ENCODE measurements at regions of chr2 and their contacts with region 1.

Region 1: GRCh38 chr2:181891966-181892798 is 652 bp downstream of the ITPRID2 start:
- DNase-seq: peak; percentile 61
- H3K4me3 Mint-ChIP-seq: peak overlapping the region; percentile 94
- H3K27ac Mint-ChIP-seq: peak overlapping the region; percentile 81
- H3K4me1 Mint-ChIP-seq: peaks cover 28% of the 10 kb centered on the region
- H3K27me3 Mint-ChIP-seq: peaks cover 12% of the 10 kb centered on the region

Region 2: GRCh38 chr2:180006781-180007579 is 1885.2 kb before region 1 on chr2 and contains the start of gene CWC22:
- CTCF ChIA-PET with region 1: no interaction called
- intact Hi-C with region 1: loop called (anchors 10 kb)
- DNase-seq: peak; percentile 93
- H3K4me3 Mint-ChIP-seq: peak within 1 kb of the TSS; percentile 92
- H3K27ac Mint-ChIP-seq: peak within 1 kb of the TSS; percentile 100
- H3K4me1 Mint-ChIP-seq: peaks cover 36% of the 10 kb centered on the region
- H3K27me3 Mint-ChIP-seq: no peaks in the 10 kb centered on the region
- total RNA-seq, gene CWC22: 20.4 TPM

Region 3: GRCh38 chr2:181466661-181467576 is 425.3 kb before region 1 on chr2:
- CTCF ChIA-PET with region 1: no interaction called
- intact Hi-C with region 1: loop called (anchors 5 kb)
- DNase-seq: peak; percentile 92
- H3K4me3 Mint-ChIP-seq: no peak overlapping the region
- H3K27ac Mint-ChIP-seq: peak overlapping the region; percentile 54
- H3K4me1 Mint-ChIP-seq: peaks cover 86% of the 10 kb centered on the region
- H3K27me3 Mint-ChIP-seq: no peaks in the 10 kb centered on the region

Region 4: GRCh38 chr2:181790716-181791649 is 101.2 kb before region 1 on chr2:
- CTCF ChIA-PET with region 1: no interaction called
- intact Hi-C with region 1: loop called (anchors 1 kb)
- DNase-seq: peak; percentile 55
- H3K4me3 Mint-ChIP-seq: no peak overlapping the region
- H3K27ac Mint-ChIP-seq: no peak overlapping the region
- H3K4me1 Mint-ChIP-seq: peaks cover 19% of the 10 kb centered on the region
- H3K27me3 Mint-ChIP-seq: peaks cover 12% of the 10 kb centered on the region

Region 5: GRCh38 chr2:181953881-181954537 is 61.8 kb after region 1 on chr2:
- CTCF ChIA-PET with region 1: interaction called, 3 read pairs
- intact Hi-C with region 1: loop called (anchors 5 kb)
- DNase-seq: peak; percentile 82
- H3K4me3 Mint-ChIP-seq: peak overlapping the region; percentile 17
- H3K27ac Mint-ChIP-seq: no peak overlapping the region
- H3K4me1 Mint-ChIP-seq: peaks cover 9% of the 10 kb centered on the region
- H3K27me3 Mint-ChIP-seq: peaks cover 19% of the 10 kb centered on the region